HEK293T (cell line): ENCODE measurements at regions of chr15 and their contacts with region 1.

Region 1: DNA sequence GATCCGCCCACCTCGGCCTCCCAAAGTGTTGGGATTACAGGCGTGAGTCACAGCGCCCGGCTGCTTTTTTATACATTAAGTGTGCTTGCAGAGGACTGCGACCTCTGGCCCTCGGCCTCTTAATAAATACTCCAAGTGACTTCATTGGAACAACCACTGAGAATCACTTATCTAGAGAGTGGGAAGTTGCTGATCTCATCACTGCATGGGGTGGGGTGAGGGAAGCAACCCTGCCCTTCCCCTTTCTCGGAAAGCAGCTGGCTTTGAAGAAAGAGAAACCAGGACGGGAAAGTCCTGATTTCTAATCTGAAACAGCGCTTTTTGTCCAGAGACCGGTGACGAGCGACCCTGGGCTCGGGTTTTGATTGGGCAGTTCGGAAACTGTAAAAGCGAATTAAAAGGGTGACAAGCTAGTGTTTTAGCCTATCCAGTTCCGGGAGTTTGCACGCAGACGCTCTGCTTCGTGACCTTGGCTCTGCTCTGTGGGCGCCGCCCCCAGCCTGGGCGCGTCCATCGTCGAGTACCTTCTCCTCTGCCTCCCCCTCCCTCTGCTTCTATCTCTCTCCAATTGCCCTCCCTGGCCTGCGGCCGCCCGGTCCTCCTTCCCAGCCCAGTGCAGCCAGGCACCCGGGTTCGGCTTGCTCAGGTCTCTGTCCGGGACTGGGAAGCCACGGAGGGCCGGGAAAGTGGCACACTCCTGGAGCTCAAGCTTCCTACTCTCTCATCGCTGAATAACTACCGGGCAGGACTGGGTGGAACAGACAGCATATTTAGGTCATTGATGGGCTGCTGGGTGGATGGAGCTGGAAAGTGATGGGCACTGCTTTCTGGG is 7.5 kb upstream of the TRIM69 start:
- DNase-seq: peak; percentile 80

Region 2: GRCh38 chr15:44663409-44664308 is 65.1 kb before region 1 on chr15 and contains the start of gene SPG11:
- CTCF ChIA-PET with region 1: interaction called, 6 read pairs
- POLR2A ChIA-PET with region 1: interaction called, 12 read pairs
- DNase-seq: peak; percentile 93

Region 3: DNA sequence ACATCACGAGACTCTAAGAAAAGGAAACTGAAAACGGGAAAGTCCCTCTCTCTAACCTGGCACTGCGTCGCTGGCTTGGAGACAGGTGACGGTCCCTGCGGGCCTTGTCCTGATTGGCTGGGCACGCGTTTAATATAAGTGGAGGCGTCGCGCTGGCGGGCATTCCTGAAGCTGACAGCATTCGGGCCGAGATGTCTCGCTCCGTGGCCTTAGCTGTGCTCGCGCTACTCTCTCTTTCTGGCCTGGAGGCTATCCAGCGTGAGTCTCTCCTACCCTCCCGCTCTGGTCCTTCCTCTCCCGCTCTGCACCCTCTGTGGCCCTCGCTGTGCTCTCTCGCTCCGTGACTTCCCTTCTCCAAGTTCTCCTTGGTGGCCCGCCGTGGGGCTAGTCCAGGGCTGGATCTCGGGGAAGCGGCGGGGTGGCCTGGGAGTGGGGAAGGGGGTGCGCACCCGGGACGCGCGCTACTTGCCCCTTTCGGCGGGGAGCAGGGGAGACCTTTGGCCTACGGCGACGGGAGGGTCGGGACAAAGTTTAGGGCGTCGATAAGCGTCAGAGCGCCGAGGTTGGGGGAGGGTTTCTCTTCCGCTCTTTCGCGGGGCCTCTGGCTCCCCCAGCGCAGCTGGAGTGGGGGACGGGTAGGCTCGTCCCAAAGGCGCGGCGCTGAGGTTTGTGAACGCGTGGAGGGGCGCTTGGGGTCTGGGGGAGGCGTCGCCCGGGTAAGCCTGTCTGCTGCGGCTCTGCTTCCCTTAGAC is 17.3 kb before region 1 on chr15 and contains the start of gene B2M:
- CTCF ChIA-PET with region 1: interaction called, 5 read pairs
- POLR2A ChIA-PET with region 1: interaction called, 75 read pairs
- DNase-seq: peak; percentile 88

Region 4: DNA sequence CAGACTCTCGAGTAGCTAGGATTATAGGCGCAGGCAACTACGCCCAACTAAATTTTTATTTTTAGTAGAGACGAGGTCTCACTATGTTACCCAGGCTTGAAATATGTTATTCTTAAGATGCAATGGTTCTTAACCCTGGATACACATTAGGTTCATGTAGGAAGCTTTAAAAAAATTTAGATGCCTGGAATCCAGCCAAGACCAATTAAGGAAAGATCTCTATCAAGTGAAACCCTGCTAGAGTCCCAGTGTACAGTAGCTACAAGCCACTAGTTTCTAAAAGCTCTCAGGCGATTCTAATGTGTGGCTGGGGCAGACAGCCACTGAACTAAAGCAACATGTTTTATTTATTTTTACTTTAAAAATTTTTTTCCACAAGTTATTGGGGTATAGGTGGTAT is 40.7 kb after region 1 on chr15:
- CTCF ChIA-PET with region 1: interaction called, 10 read pairs
- POLR2A ChIA-PET with region 1: interaction called, 5 read pairs
- DNase-seq: no peak

Region 5: GRCh38 chr15:44861439-44861910 is 132.7 kb after region 1 on chr15:
- CTCF ChIA-PET with region 1: no interaction called
- POLR2A ChIA-PET with region 1: no interaction called
- DNase-seq: no peak